Mammary epithelial cell (primary cell): ENCODE measurements at regions of chr5 and their contacts with region 1.

Region 1: DNA sequence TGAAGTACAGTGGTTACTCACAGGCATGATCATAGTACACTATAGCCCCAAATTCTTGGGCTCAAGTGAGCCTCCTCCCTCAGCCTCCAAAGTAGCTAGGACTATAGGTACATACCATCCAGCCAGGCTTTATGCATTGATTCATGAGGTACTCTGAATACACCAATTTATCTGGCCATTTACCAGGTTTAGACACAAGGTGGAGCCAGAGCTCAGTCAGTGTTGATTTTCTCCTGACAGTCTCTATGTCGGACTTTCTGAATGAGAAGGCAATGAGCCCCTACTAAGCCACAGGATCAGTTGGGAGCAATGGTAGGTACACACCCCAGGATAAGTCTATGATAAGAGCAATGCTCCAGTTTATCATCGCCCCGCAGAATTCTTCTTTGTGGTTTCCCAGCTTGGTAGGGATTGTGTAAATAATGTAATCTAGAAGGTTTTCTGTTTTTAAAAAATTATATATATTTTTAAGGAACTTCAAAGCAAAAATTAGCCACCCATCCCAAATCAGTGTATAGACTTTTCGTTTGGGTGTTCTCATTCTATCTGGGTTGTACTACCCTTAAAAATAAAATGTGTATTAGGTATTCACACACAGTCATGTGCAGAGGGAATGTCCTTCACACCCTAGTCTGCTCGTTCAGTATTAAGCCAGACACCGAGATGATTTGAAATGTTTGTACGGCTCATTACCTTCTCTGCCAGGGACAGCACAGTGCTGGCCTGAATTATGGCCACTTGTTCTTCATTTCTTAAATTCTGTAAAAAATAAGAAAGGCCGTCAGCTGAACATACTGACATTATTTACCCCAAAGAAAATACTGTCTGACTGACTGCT is 118.4 kb upstream of the DPYSL3 start:
- DNase-seq: peak; percentile 56
- H3K4me3 ChIP-seq: no peak overlapping the region
- H3K27ac ChIP-seq: no peak overlapping the region
- H3K4me1 ChIP-seq: no peaks in the 10 kb centered on the region
- H3K27me3 ChIP-seq: no peaks in the 10 kb centered on the region
- CTCF ChIP-seq: peak; percentile 78 to 86

Region 2: GRCh38 chr5:147673266-147673665 is 45.0 kb after region 1 on chr5:
- CTCF ChIA-PET with region 1: no interaction called
- dilution Hi-C with region 1: no loop called
- in situ Hi-C with region 1: no loop called
- intact Hi-C with region 1: loop called (anchors 5 kb)
- DNase-seq: no peak
- H3K4me3 ChIP-seq: no peak overlapping the region
- H3K27ac ChIP-seq: no peak overlapping the region
- H3K4me1 ChIP-seq: no peaks in the 10 kb centered on the region
- H3K27me3 ChIP-seq: no peaks in the 10 kb centered on the region
- CTCF ChIP-seq: no peak

Region 3: GRCh38 chr5:147690595-147690994 is 62.3 kb after region 1 on chr5:
- CTCF ChIA-PET with region 1: interaction called, 3 read pairs
- dilution Hi-C with region 1: no loop called
- in situ Hi-C with region 1: no loop called
- intact Hi-C with region 1: loop called (anchors 1 kb)
- DNase-seq: peak; percentile 50
- H3K4me3 ChIP-seq: no peak overlapping the region
- H3K27ac ChIP-seq: no peak overlapping the region
- H3K4me1 ChIP-seq: no peaks in the 10 kb centered on the region
- H3K27me3 ChIP-seq: peaks cover 2% of the 10 kb centered on the region
- CTCF ChIP-seq: peak; percentile 29 to 50

Region 4: GRCh38 chr5:147822686-147823491 is 194.6 kb after region 1 on chr5:
- CTCF ChIA-PET with region 1: interaction called, 17 read pairs
- dilution Hi-C with region 1: no loop called
- in situ Hi-C with region 1: loop called in 1 of 2 experiments (anchors 5 kb)
- intact Hi-C with region 1: loop called (anchors 1 kb)
- DNase-seq: peak; percentile 36
- H3K4me3 ChIP-seq: no peak overlapping the region
- H3K27ac ChIP-seq: no peak overlapping the region
- H3K4me1 ChIP-seq: no peaks in the 10 kb centered on the region
- H3K27me3 ChIP-seq: no peaks in the 10 kb centered on the region
- CTCF ChIP-seq: peak; percentile 94 to 96

Region 5: GRCh38 chr5:147835386-147835798 is 207.1 kb after region 1 on chr5:
- CTCF ChIA-PET with region 1: no interaction called
- dilution Hi-C with region 1: no loop called
- in situ Hi-C with region 1: loop called in 1 of 2 experiments (anchors 10 kb)
- intact Hi-C with region 1: no loop called
- DNase-seq: peak; percentile 18
- H3K4me3 ChIP-seq: no peak overlapping the region
- H3K27ac ChIP-seq: no peak overlapping the region
- H3K4me1 ChIP-seq: no peaks in the 10 kb centered on the region
- H3K27me3 ChIP-seq: no peaks in the 10 kb centered on the region
- CTCF ChIP-seq: no peak

Region 6: DNA sequence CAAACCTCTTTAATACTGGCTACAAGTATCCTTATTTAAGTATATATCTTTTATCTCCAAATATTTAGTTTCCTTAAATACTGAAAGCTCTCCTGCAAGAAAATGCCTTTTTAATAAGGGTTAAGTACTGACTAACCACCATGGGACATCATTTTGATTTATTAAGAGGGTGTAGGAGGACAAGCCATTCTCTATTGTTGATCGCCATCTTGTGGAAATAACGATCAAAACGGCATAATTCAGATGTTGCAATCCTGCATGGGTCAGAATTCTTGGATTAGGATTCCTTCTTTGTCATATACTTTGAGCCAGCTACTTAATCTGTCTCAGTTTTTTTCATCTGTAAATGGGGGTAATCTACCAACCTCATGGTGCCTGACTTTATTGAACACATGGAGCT is 306.8 kb after region 1 on chr5:
- CTCF ChIA-PET with region 1: no interaction called
- dilution Hi-C with region 1: no loop called
- in situ Hi-C with region 1: no loop called
- intact Hi-C with region 1: loop called (anchors 1 kb)
- DNase-seq: peak; percentile 69
- H3K4me3 ChIP-seq: no peak overlapping the region
- H3K27ac ChIP-seq: no peak overlapping the region
- H3K4me1 ChIP-seq: peaks cover 4% of the 10 kb centered on the region
- H3K27me3 ChIP-seq: no peaks in the 10 kb centered on the region
- CTCF ChIP-seq: peak; percentile 64